Heart right ventricle (tissue), 16 donors: ENCODE measurements at regions of chr11 and their contacts with region 1.

Region 1: DNA sequence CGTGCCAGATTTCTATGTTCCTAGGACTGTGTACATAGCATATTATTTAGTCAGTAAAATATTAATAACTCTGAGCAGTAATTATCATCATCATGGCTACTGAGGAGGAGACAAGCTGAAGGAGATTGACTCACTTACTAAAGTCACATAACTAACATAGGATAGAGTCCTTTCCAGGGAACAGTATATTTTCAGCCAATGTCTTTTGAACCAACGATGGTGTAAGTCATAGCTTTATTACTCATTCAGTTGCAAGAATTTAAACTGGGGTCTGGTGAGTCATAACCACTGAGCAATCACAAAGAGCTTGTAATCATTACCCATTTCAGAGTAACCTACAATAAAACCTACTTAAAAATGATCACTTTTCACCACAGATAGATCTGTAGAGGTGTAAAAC is 1564.8 kb upstream of the TENM4 start:
- DNase-seq: no peak
- ATAC-seq: no peak
- H3K4me3 ChIP-seq: no peak overlapping the region
- H3K27ac ChIP-seq: no peak overlapping the region
- H3K4me1 ChIP-seq: no peaks in the 10 kb centered on the region
- H3K27me3 ChIP-seq: no peaks in the 10 kb centered on the region
- CTCF ChIP-seq: no peak

Region 2: DNA sequence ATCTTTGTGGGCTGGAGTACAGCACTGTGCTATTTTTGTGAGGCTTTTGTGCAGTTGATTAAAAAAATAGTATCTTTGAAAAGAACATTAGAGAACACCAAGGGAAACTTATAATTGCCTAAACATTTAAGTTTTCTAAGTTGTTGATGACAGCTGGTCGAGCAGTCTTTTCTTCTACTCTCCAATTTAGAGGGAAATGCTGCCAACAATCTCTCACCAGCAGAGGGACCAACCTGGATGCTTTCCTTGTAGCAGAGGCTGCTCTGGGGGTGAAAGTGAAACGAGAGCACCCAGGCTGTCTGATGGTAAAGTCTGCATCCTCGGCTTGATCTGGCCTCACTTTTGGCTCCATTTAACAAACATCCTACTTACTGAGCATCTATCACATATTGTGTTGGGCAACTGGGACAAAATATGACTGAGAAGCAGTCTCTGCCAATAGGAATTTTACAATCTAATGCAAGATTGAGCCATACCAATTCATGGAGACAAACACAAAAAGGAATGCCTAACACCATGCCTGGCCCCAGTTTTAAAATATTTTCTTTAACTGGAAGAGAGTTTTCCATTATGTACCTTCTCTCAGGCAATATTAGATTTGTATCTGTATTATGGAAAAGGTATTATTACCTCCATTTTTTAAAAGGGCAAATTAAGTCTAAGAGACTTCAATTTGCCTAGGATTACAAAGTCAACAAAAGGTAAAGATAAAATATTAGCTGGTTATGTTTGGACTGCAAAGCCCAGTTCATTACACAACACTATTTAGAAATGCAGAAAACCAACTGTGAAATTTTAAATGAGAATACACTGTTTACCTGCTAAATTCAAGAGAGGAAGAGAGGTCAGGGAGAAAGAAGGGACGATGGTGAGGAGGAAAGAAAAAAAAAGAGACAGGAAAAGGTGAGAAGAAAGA is 278.0 kb before region 1 on chr11:
- intact Hi-C with region 1: loop called in 1 of 10 experiments (anchors 10 kb)
- DNase-seq: no peak
- ATAC-seq: no peak
- H3K4me3 ChIP-seq: no peak overlapping the region
- H3K27ac ChIP-seq: no peak overlapping the region
- H3K4me1 ChIP-seq: no peaks in the 10 kb centered on the region
- H3K27me3 ChIP-seq: no peaks in the 10 kb centered on the region
- CTCF ChIP-seq: peak in 3 of 9 donors; percentile 12 to 18 (median 17)

Region 3: GRCh38 chr11:80886684-80887083 is 118.9 kb before region 1 on chr11:
- intact Hi-C with region 1: no loop called
- DNase-seq: no peak
- ATAC-seq: no peak
- H3K4me3 ChIP-seq: no peak overlapping the region
- H3K27ac ChIP-seq: no peak overlapping the region
- H3K4me1 ChIP-seq: no peaks in the 10 kb centered on the region
- H3K27me3 ChIP-seq: no peaks in the 10 kb centered on the region
- CTCF ChIP-seq: no peak

Region 4: GRCh38 chr11:81380395-81380794 is 374.8 kb after region 1 on chr11:
- intact Hi-C with region 1: no loop called
- DNase-seq: no peak
- ATAC-seq: no peak
- H3K4me3 ChIP-seq: no peak overlapping the region
- H3K27ac ChIP-seq: no peak overlapping the region
- H3K4me1 ChIP-seq: no peaks in the 10 kb centered on the region
- H3K27me3 ChIP-seq: no peaks in the 10 kb centered on the region
- CTCF ChIP-seq: no peak